SK-N-SH (cell line): ENCODE measurements at regions of chr14 and their contacts with region 1.

Region 1: GRCh38 chr14:99266181-99267178 is 5.5 kb downstream of the BCL11B start:
- DNase-seq: peak; percentile 82
- H3K4me3 ChIP-seq: peak overlapping the region in 1 of 2 experiments; percentile 38; a peak in 1 of 4 replicates
- H3K27ac ChIP-seq: no peak overlapping the region
- H3K4me1 ChIP-seq: no peaks in the 10 kb centered on the region; a peak in 2 of 4 replicates
- H3K27me3 ChIP-seq: peaks cover 76% of the 10 kb centered on the region
- CTCF ChIP-seq: peak; percentile 99
- EP300 ChIP-seq: no peak
- RAD21 ChIP-seq: peak; percentile 95

Region 2: DNA sequence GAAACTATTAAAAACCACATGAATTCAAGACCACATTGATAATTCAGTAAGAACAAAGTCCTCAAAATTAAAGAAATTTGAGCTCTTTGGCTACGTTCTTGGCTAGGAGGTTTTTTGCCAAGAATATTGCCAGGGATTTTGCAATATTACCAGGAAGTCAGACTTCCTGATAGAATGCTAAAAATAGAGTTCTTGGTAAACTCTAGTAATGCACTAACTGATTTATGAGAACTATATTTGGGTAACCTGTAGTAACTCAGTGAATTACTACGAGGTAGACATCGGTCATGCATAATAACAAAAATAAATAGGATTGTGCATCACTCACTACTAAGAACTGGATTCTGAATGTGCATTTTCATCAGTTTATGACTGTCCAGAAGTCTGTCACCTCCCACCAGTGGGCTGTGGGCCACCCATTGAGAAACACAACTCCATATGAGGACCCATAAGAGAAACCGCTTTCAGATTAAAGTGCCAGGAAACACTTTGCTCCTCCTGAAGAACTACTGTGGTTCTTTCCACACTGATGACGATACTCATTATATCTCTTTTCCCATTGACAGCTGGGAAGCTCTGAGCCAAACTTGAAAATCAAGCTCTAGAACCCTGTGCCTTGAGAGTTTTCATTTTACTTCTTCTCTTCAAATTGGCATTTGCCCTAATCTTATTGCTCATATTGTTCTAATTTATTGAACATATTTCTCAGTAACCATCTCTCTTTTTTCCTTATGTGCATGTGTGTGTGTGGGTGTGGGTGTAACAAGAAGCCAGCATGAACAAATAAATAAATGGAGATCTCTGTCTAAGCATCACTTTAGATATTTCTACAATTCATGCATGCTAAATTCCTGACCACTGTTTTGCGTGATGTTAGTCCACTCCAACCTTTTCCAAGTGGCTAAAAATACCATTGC is 111.0 kb before region 1 on chr14:
- CTCF ChIA-PET with region 1: no interaction called
- POLR2A ChIA-PET with region 1: no interaction called
- DNase-seq: no peak
- H3K4me3 ChIP-seq: no peak overlapping the region
- H3K27ac ChIP-seq: no peak overlapping the region
- H3K4me1 ChIP-seq: no peaks in the 10 kb centered on the region
- H3K27me3 ChIP-seq: peaks cover 5% of the 10 kb centered on the region; the same call in 1 of the 2 replicates
- CTCF ChIP-seq: no peak
- EP300 ChIP-seq: no peak
- RAD21 ChIP-seq: no peak

Region 3: GRCh38 chr14:99201351-99202073 is 65.0 kb before region 1 on chr14:
- CTCF ChIA-PET with region 1: interaction called, 12 read pairs
- POLR2A ChIA-PET with region 1: no interaction called
- DNase-seq: no peak
- H3K4me3 ChIP-seq: no peak overlapping the region
- H3K27ac ChIP-seq: no peak overlapping the region
- H3K4me1 ChIP-seq: no peaks in the 10 kb centered on the region; a peak in 1 of 4 replicates
- H3K27me3 ChIP-seq: peaks cover 82% of the 10 kb centered on the region
- CTCF ChIP-seq: no peak
- EP300 ChIP-seq: no peak
- RAD21 ChIP-seq: no peak

Region 4: GRCh38 chr14:99241325-99242010 is 25.0 kb before region 1 on chr14:
- CTCF ChIA-PET with region 1: interaction called, 20 read pairs
- POLR2A ChIA-PET with region 1: no interaction called
- DNase-seq: no peak
- H3K4me3 ChIP-seq: no peak overlapping the region
- H3K27ac ChIP-seq: no peak overlapping the region
- H3K4me1 ChIP-seq: no peaks in the 10 kb centered on the region; a peak in 1 of 4 replicates
- H3K27me3 ChIP-seq: peaks cover 82% of the 10 kb centered on the region
- CTCF ChIP-seq: no peak
- EP300 ChIP-seq: no peak
- RAD21 ChIP-seq: no peak